Right ventricle myocardium superior (tissue), 1 donor: ENCODE measurements at regions of chr2 and their contacts with region 1.

Region 1: GRCh38 chr2:10889651-10890215 is 22.0 kb upstream of the KCNF1 start:
- DNase-seq: no peak
- ATAC-seq: peak; percentile 38

Region 2: DNA sequence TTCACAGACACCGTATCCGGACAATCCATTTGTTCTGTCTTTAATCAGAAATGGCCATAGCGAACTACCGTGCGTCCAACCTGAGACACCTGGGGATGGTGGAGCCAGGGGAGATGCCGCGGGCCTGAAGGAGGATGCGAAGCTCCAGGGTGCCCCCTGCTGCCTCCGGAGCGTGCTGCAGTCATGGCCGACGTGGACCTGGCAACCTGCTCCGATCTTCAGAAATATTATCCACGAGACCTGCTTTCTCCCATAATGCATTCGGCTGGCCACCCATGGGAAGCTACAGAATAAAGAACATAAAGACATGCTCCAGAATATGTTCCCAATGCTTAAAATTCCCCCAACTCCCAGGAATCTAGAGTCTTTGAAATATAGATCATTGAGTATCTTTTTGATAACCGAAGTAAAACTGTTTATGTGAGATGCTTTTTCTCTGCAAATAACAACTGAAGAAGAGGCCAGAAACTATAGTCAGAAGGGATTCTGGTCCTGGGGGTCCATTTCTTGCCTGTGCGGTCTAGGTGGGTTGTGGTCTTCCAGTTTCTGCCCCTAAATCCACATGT is 234.9 kb after region 1 on chr2:
- intact Hi-C with region 1: loop called (anchors 10 kb)
- DNase-seq: peak; percentile 73
- ATAC-seq: peak; percentile 73